Common myeloid progenitor, CD34-positive (primary cell): ENCODE measurements at regions of chr16 and their contacts with region 1.

Region 1: DNA sequence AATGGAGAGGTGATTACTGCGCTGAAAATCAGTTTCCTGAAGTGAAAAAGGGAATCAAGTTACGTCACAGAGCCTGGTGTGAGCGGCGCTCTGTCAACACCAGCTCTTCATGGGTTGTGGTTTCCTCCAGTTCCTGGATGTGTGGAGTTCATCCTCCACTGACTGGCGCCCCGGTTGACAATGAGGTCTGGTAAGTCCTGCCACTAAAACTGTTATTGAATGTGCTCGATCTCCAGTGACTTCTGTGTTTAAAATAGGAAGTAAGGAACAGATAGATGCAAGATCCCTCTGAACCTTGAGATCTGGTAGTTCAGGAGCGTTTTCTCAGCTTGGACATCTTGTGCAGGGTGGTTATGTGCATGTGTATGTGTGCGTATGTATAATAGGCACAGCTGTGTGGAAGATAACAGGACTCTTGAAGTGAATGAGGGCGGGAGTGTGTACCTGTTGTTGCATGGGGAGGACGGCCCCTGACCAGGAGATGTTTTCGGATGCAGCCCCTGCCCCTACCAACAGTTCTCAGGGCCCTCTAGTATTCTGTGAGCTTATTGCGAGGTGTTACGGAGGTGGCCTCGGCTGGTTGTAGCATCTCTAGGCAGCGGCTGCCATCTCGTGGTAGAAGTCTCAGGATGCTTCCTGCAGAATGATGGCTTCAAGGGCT is 22.0 kb upstream of the GOT2 start:
- DNase-seq: peak; percentile 86 to 96 (median 94)
- H3K4me3 ChIP-seq: peak overlapping the region in 5 of 7 experiments; percentile 25 to 69 (median 54)
- H3K27ac ChIP-seq: no peak overlapping the region
- H3K4me1 ChIP-seq: peaks cover 0 to 12% (median 7%) of the 10 kb centered on the region in 4 experiments
- H3K27me3 ChIP-seq: no peaks in the 10 kb centered on the region

Region 2: DNA sequence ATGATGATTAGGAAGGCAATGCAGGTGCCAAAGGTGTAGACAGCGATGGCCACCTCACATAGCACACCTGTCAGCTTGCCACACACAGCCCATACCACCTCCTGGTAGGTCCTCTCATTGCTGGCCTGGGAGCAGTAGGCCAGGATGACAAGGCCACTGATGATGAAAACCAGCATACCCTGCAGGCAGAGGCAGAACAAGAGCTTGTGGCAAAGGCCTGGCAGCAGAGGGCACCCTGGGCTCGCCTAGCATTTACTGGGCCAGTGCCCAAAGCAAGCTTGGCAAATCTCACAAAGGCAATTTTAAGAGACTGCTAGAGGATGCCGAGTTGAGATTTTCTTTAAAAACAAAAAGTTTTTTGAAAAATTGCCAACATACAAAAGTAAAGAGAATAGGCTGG is 77.4 kb before region 1 on chr16:
- CTCF ChIA-PET with region 1: interaction called, 14 read pairs
- POLR2A ChIA-PET with region 1: no interaction called
- DNase-seq: peak; percentile 16 to 50 (median 43)
- H3K4me3 ChIP-seq: no peak overlapping the region
- H3K27ac ChIP-seq: no peak overlapping the region
- H3K4me1 ChIP-seq: peaks cover 0 to 4% (median 2%) of the 10 kb centered on the region in 4 experiments
- H3K27me3 ChIP-seq: no peaks in the 10 kb centered on the region

Region 3: DNA sequence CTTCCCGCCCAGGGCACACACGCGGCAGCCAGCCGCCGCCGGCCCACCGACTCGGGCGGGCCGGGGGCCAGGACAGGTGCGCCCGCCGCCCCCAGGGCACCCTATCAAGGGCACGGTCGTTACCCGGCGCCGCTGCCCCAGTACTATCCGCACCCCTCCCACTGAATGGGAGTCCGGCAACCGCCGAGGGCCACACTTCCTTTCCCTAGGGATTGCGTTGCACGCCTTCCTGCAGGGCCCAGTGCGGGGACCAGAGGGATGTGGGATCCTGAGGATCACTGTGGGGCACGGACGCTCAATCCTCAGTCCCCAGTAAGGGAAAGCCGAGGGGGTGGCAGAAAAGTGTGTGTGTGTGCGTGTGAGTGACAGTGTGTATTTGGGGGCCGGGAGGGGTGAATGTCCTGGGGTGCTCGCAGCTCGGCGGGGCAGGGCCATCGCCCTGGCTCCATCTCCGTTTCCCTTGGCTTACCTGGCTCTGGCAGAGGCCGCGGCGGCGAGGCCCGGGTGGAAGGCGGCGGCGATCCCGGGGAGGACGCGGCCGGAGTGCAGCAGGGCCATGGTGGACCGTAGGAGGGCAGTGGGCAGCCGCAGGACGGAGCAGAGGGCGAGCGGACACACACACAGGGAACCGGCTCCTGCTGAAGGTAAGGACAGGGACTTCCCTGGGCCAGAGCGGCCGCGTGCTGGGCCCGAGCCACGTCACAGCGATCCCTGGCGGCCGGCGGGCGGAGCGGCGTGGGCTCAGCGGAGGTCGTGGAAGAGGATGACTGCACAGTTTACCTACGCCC is 22.3 kb before region 1 on chr16 and contains the start of gene GOT2:
- CTCF ChIA-PET with region 1: interaction called, 12 read pairs
- POLR2A ChIA-PET with region 1: interaction called, 3 read pairs
- DNase-seq: peak; percentile 87 to 93 (median 91)
- H3K4me3 ChIP-seq: peak within 1 kb of the TSS; percentile 65 to 98 (median 88)
- H3K27ac ChIP-seq: peak within 1 kb of the TSS; percentile 64 to 79
- H3K4me1 ChIP-seq: peaks cover 0 to 12% (median 11%) of the 10 kb centered on the region in 4 experiments
- H3K27me3 ChIP-seq: no peaks in the 10 kb centered on the region

Region 4: DNA sequence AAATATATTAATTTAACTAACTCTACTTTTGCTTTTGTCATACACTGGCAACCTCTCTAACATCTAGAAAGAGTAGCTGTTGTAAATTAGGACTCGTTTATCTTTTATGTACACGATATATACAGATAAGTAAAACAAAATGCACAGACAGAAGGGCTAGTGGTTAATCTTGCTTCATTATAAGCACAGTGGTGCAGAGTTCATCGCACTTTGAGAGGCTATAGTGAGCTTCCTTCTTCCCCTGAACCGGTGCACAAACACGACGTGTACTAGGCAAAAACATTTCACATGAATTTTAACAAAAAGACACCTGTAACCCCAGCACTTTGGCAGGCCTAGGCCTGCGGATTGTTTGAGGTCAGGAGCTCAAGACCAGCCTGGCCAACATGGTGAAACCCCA is 11.6 kb before region 1 on chr16:
- CTCF ChIA-PET with region 1: interaction called, 13 read pairs
- POLR2A ChIA-PET with region 1: no interaction called
- DNase-seq: no peak
- H3K4me3 ChIP-seq: no peak overlapping the region
- H3K27ac ChIP-seq: no peak overlapping the region
- H3K4me1 ChIP-seq: no peaks in the 10 kb centered on the region
- H3K27me3 ChIP-seq: no peaks in the 10 kb centered on the region

Region 5: DNA sequence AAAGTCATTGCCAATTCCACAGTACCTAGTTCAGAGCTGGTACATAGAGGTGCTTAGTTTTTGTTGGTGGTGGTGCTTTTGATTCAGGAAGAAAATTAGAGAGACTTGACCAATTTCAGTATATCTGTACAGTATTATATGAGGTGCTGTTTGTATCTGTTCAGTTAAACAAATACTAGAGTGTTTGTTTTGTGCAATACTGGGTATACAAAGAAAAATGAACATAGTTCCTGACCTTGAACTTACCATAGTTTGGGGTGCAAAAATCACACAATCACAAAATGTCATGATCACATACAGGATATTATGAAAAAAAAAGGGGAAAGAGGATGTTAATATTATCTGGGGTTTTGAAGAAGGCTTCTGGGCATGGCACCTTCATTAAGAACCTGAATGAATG is 17.8 kb after region 1 on chr16:
- CTCF ChIA-PET with region 1: no interaction called
- POLR2A ChIA-PET with region 1: no interaction called
- DNase-seq: no peak
- H3K4me3 ChIP-seq: no peak overlapping the region
- H3K27ac ChIP-seq: no peak overlapping the region
- H3K4me1 ChIP-seq: no peaks in the 10 kb centered on the region
- H3K27me3 ChIP-seq: no peaks in the 10 kb centered on the region